Panc1 (cell line): ENCODE measurements at regions of chr1 and their contacts with region 1.

Region 1: GRCh38 chr1:162040681-162041080 is 17.0 kb upstream of the OLFML2B start:
- DNase-seq: no peak
- ATAC-seq: 0 out of 2 replicates have a peak, but pooled peaks have one; percentile 56
- H3K4me3 ChIP-seq: no peak overlapping the region
- H3K27ac ChIP-seq: no peak overlapping the region
- H3K4me1 ChIP-seq: no peaks in the 10 kb centered on the region
- H3K27me3 ChIP-seq: no peaks in the 10 kb centered on the region
- CTCF ChIP-seq: peak; percentile 72

Region 2: GRCh38 chr1:161738627-161739287 is 301.9 kb before region 1 on chr1:
- CTCF ChIA-PET with region 1: interaction called, 16 read pairs
- POLR2A ChIA-PET with region 1: no interaction called
- in situ Hi-C with region 1: no loop called
- intact Hi-C with region 1: no loop called
- DNase-seq: no peak
- ATAC-seq: peak; percentile 81
- H3K4me3 ChIP-seq: no peak overlapping the region
- H3K27ac ChIP-seq: no peak overlapping the region
- H3K4me1 ChIP-seq: no peaks in the 10 kb centered on the region
- H3K27me3 ChIP-seq: no peaks in the 10 kb centered on the region
- CTCF ChIP-seq: peak; percentile 77

Region 3: GRCh38 chr1:161766102-161766981 is 274.3 kb before region 1 on chr1 and contains the start of gene ATF6:
- CTCF ChIA-PET with region 1: interaction called, 10 read pairs
- POLR2A ChIA-PET with region 1: no interaction called
- in situ Hi-C with region 1: no loop called
- intact Hi-C with region 1: loop called (anchors 2 kb)
- DNase-seq: peak; percentile 89
- ATAC-seq: peak; percentile 86
- H3K4me3 ChIP-seq: peak within 1 kb of the TSS; percentile 99 to 100
- H3K27ac ChIP-seq: peak within 1 kb of the TSS; percentile 94
- H3K4me1 ChIP-seq: peaks cover 6% of the 10 kb centered on the region; the same call in 1 of the 2 replicates
- H3K27me3 ChIP-seq: no peaks in the 10 kb centered on the region
- CTCF ChIP-seq: no peak
- total RNA-seq, gene ATF6: 16.4 TPM

Region 4: GRCh38 chr1:161792740-161793139 is 247.9 kb before region 1 on chr1:
- CTCF ChIA-PET with region 1: interaction called, 99 read pairs
- POLR2A ChIA-PET with region 1: interaction called, 14 read pairs
- in situ Hi-C with region 1: no loop called
- intact Hi-C with region 1: loop called (anchors 2 kb)
- DNase-seq: peak; percentile 62
- ATAC-seq: peak; percentile 90
- H3K4me3 ChIP-seq: no peak overlapping the region
- H3K27ac ChIP-seq: no peak overlapping the region
- H3K4me1 ChIP-seq: no peaks in the 10 kb centered on the region
- H3K27me3 ChIP-seq: no peaks in the 10 kb centered on the region
- CTCF ChIP-seq: peak; percentile 61; the same call in 1 of the 2 replicates

Region 5: DNA sequence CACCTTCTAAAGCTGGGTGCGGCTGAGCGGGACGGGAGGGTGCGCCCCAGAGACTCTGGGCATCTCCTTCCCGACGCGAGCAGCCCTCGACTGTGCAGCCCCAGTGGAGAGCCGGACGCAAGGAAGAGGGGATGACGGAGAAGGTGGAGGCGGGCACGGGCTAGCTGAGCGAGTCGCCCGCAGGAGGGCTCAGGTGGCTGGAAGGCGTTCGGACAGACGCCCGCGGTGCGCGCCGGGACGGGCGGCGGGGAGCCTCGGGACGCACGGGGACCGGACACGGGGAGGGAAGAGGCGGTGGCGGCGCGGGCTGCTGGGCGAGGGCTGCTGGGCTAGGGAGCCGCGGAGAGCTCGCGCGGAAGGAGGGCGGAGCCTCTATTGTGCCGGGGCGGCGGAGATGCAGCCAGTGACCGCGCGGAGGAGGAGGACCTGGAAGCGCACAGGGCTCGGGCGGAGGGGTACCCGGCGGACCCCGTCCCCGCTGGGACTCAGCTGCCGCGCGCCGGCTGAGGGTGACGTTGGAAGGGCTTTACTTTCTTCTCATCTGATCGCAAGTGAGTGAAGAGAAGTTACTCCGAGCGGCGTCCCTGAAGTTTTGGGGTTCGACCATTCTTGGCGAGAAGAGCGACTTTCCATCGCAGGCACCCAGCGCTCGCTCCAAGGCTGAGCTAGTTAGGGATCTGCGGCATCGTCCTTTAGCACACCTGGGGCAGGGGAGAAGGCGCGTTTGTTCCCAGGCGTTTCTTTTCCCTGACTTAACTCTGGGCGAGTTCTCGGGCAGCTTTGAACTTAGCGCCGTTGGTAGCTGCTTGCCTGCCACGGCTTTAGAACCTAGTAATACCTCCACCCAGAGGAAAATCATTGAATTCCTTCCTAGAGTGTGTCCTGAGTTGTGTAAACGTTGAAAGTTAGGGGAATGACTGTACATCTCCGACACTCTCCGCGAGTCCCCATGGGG is 16.9 kb before region 1 on chr1 and contains the start of gene OLFML2B:
- CTCF ChIA-PET with region 1: interaction called, 16 read pairs
- POLR2A ChIA-PET with region 1: no interaction called
- in situ Hi-C with region 1: no loop called
- intact Hi-C with region 1: no loop called
- DNase-seq: peak; percentile 61
- ATAC-seq: peak; percentile 96
- H3K4me3 ChIP-seq: peak within 1 kb of the TSS; percentile 77 to 89
- H3K27ac ChIP-seq: no peak within 1 kb of the TSS
- H3K4me1 ChIP-seq: peaks cover 3% of the 10 kb centered on the region
- H3K27me3 ChIP-seq: peaks cover 9% of the 10 kb centered on the region
- CTCF ChIP-seq: peak; percentile 50
- total RNA-seq, gene OLFML2B: 1.5 TPM

Region 6: DNA sequence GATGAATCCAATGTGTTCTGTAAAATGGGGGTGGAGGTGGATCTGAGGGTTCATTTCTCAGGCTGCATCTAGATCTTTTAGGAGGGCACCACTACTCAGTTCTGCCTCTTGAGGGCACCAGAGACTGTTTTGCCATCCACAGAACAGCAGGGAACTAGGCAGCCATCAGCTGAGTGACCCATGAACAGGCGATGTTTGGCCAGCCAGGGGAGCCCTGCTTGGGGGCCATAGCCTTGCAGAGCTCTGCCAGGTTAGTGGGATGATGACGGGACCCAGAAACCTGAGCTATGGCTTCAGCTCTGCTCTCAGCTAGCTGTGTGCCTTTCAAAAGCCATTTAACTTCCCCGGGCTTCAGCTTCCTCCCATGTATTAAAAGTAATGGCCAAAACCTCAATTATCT is 15.4 kb after region 1 on chr1:
- CTCF ChIA-PET with region 1: interaction called, 11 read pairs
- POLR2A ChIA-PET with region 1: no interaction called
- in situ Hi-C with region 1: no loop called
- intact Hi-C with region 1: no loop called
- DNase-seq: peak; percentile 63
- ATAC-seq: peak; percentile 92
- H3K4me3 ChIP-seq: no peak overlapping the region
- H3K27ac ChIP-seq: peak overlapping the region; percentile 76
- H3K4me1 ChIP-seq: peaks cover 17% of the 10 kb centered on the region
- H3K27me3 ChIP-seq: no peaks in the 10 kb centered on the region
- CTCF ChIP-seq: peak; percentile 96

Region 7: GRCh38 chr1:162527324-162527723 is 486.6 kb after region 1 on chr1:
- CTCF ChIA-PET with region 1: interaction called, 12 read pairs
- POLR2A ChIA-PET with region 1: no interaction called
- in situ Hi-C with region 1: no loop called
- intact Hi-C with region 1: no loop called
- DNase-seq: no peak
- ATAC-seq: no peak
- H3K4me3 ChIP-seq: no peak overlapping the region
- H3K27ac ChIP-seq: no peak overlapping the region
- H3K4me1 ChIP-seq: no peaks in the 10 kb centered on the region
- H3K27me3 ChIP-seq: no peaks in the 10 kb centered on the region
- CTCF ChIP-seq: no peak